Gastrocnemius medialis (tissue), 4 donors: ENCODE measurements at regions of chr22 and their contacts with region 1.

Region 1: GRCh38 chr22:23305922-23306374 is 125.6 kb downstream of the BCR start:
- DNase-seq: peak; percentile 69 to 70
- ATAC-seq: peak; percentile 90 to 94
- H3K4me3 ChIP-seq: peak overlapping the region in 2 of 4 donors; percentile 30
- H3K27ac ChIP-seq: peak overlapping the region; percentile 80 to 85 (median 82)
- H3K4me1 ChIP-seq: peaks cover 8 to 23% of the 10 kb centered on the region in 2 donors
- H3K27me3 ChIP-seq: no peaks in the 10 kb centered on the region
- CTCF ChIP-seq: no peak
- POLR2A ChIP-seq: no peak

Region 2: GRCh38 chr22:23128269-23129108 is 177.5 kb before region 1 on chr22:
- in situ Hi-C with region 1: no loop called
- intact Hi-C with region 1: no loop called
- DNase-seq: peak in 1 of 2 donors; percentile 34
- ATAC-seq: peak; percentile 51 to 73
- H3K4me3 ChIP-seq: no peak overlapping the region
- H3K27ac ChIP-seq: no peak overlapping the region
- H3K4me1 ChIP-seq: peaks cover 0 to 3% of the 10 kb centered on the region in 2 donors
- H3K27me3 ChIP-seq: no peaks in the 10 kb centered on the region
- CTCF ChIP-seq: peak; percentile 69 to 80 (median 75)
- POLR2A ChIP-seq: no peak

Region 3: GRCh38 chr22:23248583-23248982 is 57.4 kb before region 1 on chr22:
- in situ Hi-C with region 1: no loop called
- intact Hi-C with region 1: no loop called
- DNase-seq: no peak
- ATAC-seq: no peak
- H3K4me3 ChIP-seq: no peak overlapping the region
- H3K27ac ChIP-seq: no peak overlapping the region
- H3K4me1 ChIP-seq: no peaks in the 10 kb centered on the region
- H3K27me3 ChIP-seq: peaks cover 3 to 20% (median 8%) of the 10 kb centered on the region in 3 donors
- CTCF ChIP-seq: no peak
- POLR2A ChIP-seq: no peak

Region 4: DNA sequence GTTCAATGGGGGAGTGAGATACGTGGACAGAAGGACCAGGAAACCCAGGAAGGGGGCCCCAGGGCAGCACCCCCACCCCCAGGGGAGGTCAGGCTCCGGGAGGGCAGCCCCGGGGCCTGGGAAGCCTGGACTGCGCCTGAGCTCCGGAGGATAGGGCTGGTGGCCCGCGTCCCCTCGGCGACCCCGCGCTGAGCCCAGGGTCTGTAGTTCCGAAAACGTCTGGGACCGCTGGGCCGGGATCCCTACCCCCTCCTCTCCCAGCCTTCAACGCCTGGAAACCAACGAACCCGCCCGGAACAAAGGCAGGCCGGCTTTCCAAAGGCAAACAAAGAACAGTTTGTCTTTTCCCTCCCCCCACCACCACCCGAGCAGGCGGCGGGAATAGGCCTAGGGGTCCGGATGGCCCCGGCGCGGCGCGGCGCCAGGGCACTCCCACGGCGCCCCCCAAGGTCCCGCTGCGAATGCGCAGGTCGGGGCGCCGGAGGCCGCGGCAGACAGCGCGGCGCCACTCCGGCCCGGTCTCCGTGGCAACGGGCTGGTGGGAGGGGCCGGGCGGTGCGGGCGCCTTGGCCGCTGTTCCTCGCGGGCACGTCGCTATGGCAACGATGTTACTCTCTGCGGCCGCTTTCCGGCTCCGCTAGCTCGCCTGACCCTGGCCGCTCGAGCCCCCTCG is 215.6 kb after region 1 on chr22:
- in situ Hi-C with region 1: loop called in 1 of 4 experiments (anchors 25 kb)
- intact Hi-C with region 1: loop called (anchors 10 kb)
- DNase-seq: peak; percentile 56 to 80
- ATAC-seq: peak; percentile 81 to 88
- H3K4me3 ChIP-seq: peak overlapping the region; percentile 56 to 63 (median 58)
- H3K27ac ChIP-seq: peak overlapping the region; percentile 66 to 84 (median 72)
- H3K4me1 ChIP-seq: peaks cover 8 to 13% of the 10 kb centered on the region in 2 donors
- H3K27me3 ChIP-seq: no peaks in the 10 kb centered on the region
- CTCF ChIP-seq: no peak
- POLR2A ChIP-seq: peak; percentile 17 to 35